ENCODE measurements at regions of chr2 and their contacts with region 1.

Region 1: GRCh38 chr2:8049851-8050571 is 631.8 kb upstream of the ID2 start:
- DNase-seq: peak; percentile 87
- ATAC-seq: peak; percentile 97
- H3K4me3 Mint-ChIP-seq: peak overlapping the region; percentile 30
- H3K27ac Mint-ChIP-seq: peak overlapping the region; percentile 88
- H3K4me1 Mint-ChIP-seq: peaks cover 34% of the 10 kb centered on the region
- H3K27me3 Mint-ChIP-seq: peaks cover 5% of the 10 kb centered on the region

Region 2: DNA sequence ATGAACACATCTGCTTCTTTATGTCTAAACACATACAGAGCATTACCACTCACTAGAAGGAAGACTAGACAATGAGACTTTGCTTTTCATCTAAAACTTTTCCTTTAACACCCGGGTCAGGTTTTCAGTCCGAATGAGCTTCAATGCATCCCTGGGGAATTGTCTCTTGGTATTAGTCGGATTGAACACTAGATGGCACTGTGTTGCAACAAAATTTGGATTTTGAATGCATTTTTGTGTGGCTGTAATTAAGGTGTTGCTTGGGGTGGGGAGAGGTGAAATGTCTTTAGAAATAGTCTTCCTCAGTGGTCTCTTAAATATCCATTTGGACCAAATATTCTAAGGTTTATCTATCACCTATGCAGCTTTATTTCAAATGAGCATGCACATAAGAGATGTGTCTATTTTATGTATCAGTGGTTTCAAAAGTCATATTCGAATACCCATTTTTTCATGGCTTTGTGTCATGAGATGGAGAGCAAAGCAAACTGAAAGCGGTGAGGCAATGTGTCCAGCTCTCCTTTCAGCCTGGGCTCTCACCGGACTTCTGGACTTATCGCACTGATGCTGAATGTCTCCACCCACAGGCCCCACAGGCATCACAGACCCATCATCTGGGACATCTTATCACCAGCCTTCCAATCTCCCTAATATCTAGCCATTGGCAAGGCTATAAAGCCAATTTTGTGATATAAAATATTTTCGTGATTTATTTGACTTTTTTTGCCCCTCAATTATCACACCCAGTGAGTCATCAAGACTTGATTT is 622.5 kb before region 1 on chr2:
- CTCF ChIA-PET with region 1: no interaction called
- POLR2A ChIA-PET with region 1: no interaction called
- intact Hi-C with region 1: loop called in 1 of 2 experiments (anchors 2 kb)
- DNase-seq: no peak
- ATAC-seq: no peak
- H3K4me3 Mint-ChIP-seq: no peak overlapping the region
- H3K27ac Mint-ChIP-seq: peak overlapping the region; percentile 51
- H3K4me1 Mint-ChIP-seq: peaks cover 41% of the 10 kb centered on the region
- H3K27me3 Mint-ChIP-seq: peaks cover 9% of the 10 kb centered on the region

Region 3: DNA sequence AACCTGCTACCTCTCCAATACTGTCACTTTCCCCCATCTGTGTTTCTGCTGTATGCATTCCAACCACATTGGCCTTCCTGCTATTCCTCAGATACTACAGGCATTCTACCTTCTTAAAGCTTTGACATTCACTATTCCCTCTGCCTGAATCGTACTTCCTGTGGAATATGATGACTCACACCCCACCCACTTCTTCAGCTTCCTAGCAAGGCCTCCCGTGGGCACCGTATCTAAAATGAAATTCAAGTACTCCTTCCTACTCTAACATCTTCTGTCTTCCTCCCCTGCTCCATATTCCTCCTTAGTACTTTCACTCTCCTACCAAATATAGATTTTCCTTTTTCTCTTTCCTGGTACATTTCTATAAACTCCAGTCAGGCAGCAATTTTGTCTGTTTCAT is 422.4 kb before region 1 on chr2:
- CTCF ChIA-PET with region 1: no interaction called
- POLR2A ChIA-PET with region 1: no interaction called
- intact Hi-C with region 1: no loop called
- DNase-seq: no peak
- ATAC-seq: no peak
- H3K4me3 Mint-ChIP-seq: no peak overlapping the region
- H3K27ac Mint-ChIP-seq: no peak overlapping the region
- H3K4me1 Mint-ChIP-seq: peaks cover 3% of the 10 kb centered on the region
- H3K27me3 Mint-ChIP-seq: no peaks in the 10 kb centered on the region

Region 4: DNA sequence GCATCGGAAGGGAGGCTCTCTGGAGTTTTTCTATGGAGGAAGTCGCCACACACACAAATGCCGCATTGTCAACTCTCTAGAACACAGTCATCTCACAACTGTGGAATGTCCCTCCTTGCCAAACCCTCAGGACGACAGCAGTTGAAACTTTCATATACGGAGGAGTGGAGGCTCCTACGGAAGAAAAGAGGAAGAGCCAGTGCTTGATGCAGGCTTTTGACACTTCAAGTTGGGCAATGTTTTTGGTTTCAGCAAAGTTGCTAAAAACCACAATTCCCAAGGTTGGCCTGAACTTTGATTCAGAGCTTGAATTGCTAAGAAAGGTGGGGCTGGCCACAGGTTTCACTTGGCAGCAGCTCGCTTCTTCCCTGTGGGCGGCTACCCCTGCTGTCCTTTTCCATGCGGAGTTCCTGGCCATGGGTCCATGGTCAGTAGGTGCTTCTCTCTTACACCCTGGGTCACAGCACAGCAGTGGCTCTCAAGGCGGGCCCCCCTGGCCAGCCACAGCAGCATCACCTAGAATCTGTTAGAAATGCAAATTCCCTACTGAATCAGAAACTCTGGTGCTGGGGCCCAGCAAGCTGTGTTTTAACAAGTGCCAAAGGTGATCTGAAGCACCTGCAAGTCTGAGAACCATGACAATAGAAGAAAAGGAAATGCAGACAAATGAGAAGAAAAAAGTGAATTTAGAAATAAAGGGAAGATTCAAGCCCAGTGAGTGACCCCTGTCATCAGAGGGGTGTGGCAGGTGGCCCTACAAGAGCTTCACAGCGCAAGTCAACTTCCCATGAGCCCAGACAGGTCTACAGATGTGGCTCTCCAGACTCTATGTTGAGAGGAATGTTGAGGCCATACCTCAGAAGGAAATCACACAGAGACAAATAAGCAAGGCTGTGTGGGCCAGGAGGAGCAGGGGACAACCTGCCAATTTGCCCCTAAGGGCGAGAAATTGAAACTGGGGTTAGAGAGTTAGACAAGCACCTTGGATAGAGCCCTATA is 276.4 kb before region 1 on chr2:
- CTCF ChIA-PET with region 1: no interaction called
- POLR2A ChIA-PET with region 1: no interaction called
- intact Hi-C with region 1: loop called in 1 of 2 experiments (anchors 5 kb)
- DNase-seq: peak; percentile 66
- ATAC-seq: peak; percentile 76
- H3K4me3 Mint-ChIP-seq: peak overlapping the region; percentile 11
- H3K27ac Mint-ChIP-seq: peak overlapping the region; percentile 64
- H3K4me1 Mint-ChIP-seq: peaks cover 28% of the 10 kb centered on the region
- H3K27me3 Mint-ChIP-seq: peaks cover 3% of the 10 kb centered on the region

Region 5: DNA sequence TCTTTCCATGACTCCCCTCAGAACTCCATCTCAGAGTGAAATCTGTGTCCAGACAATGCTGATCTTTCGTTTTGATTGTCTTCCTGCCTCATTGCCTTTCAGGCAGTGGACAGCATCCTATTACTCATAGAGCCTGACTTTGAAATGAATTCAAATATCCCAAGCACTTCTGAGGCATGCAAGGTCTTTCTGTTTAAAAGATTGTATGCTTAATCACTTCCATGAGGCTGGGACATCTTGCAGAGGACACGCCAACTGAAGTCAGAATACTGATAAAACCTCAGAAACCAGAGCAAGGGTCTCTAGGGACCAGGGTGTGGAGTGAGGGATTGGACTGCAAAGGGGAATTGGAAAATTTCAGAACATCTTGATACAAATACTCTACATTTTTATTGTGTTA is 204.7 kb before region 1 on chr2:
- CTCF ChIA-PET with region 1: no interaction called
- POLR2A ChIA-PET with region 1: interaction called, 4 read pairs
- intact Hi-C with region 1: loop called (anchors 1 to 5 kb)
- DNase-seq: no peak
- ATAC-seq: no peak
- H3K4me3 Mint-ChIP-seq: no peak overlapping the region
- H3K27ac Mint-ChIP-seq: no peak overlapping the region
- H3K4me1 Mint-ChIP-seq: peaks cover 40% of the 10 kb centered on the region
- H3K27me3 Mint-ChIP-seq: peaks cover 6% of the 10 kb centered on the region

Region 6: GRCh38 chr2:7938371-7938770 is 111.6 kb before region 1 on chr2:
- CTCF ChIA-PET with region 1: no interaction called
- POLR2A ChIA-PET with region 1: no interaction called
- intact Hi-C with region 1: loop called in 1 of 2 experiments (anchors 2 kb)
- DNase-seq: no peak
- ATAC-seq: no peak
- H3K4me3 Mint-ChIP-seq: no peak overlapping the region
- H3K27ac Mint-ChIP-seq: peak overlapping the region; percentile 9
- H3K4me1 Mint-ChIP-seq: peaks cover 26% of the 10 kb centered on the region
- H3K27me3 Mint-ChIP-seq: peaks cover 7% of the 10 kb centered on the region

Region 7: DNA sequence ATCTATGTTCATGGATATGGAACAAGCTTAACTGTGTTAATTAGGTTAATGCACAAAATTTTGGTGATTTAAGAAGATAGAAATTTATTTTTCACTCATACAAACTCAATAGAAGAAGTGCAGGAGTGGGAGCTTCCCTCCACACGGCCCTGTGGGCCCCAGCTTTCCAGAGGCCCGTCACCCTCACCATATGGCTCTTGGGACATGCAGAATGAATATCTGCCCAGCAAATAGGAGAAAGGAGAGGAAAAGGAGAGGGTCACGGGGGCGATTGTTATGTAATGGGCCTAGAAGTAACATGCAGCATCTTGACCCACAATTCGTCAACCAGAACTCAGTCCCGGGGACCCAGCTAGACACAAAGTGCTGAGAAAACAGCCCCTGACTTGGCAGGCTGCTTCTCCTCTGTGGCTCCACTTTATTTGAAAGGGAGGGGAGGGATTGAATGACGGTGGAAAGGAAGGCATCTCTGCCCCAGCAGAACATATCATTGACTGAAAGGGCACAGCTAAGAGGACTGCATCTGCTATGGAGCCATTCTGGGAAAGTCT is 16.4 kb before region 1 on chr2:
- CTCF ChIA-PET with region 1: no interaction called
- POLR2A ChIA-PET with region 1: no interaction called
- intact Hi-C with region 1: no loop called
- DNase-seq: no peak
- ATAC-seq: no peak
- H3K4me3 Mint-ChIP-seq: no peak overlapping the region
- H3K27ac Mint-ChIP-seq: no peak overlapping the region
- H3K4me1 Mint-ChIP-seq: peaks cover 9% of the 10 kb centered on the region
- H3K27me3 Mint-ChIP-seq: peaks cover 2% of the 10 kb centered on the region

Region 8: DNA sequence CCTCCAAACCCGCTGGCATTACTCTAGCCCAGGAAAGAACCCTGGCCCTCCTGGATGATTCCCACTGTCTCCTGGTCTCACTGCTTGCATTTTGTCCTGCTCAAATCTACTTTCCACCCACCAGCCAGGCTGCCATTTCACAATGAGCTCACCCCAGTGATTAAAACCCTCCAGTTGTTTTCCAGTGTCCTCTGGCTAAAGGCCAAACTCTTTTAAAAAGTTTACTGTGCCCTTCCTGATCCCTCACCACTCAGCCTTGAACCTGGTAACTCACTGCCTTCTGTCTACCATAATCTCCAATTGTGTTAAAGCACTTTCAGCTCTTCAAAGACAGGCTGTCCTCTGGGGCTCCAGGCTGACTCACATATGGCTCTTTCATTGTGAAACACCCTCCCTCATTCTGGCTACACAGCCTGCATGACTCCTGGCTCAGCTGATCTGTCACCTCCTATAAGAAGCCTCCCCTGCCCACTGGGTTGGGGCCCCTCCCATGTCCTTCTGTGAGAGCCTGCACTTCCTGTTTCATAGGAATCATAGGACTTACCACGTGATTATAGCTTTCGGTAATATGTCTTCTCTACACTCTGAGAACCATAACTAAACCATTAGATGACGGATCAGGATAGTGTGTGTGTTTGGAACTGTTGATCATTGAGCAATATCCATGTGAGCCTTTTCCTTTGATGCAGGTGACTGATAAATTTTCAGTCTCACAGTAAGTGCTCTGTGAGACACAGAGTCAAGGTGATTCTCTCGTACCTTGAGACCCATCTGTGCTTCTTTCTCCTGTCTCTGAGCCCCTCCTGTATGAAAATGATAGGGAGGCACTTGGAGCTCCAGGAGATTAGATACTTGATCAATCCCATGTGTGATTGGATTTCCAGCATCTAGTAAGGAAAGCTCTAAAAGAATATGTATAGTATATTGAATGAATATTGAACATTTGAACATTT is 41.0 kb after region 1 on chr2:
- CTCF ChIA-PET with region 1: no interaction called
- POLR2A ChIA-PET with region 1: no interaction called
- intact Hi-C with region 1: loop called in 1 of 2 experiments (anchors 1 kb)
- DNase-seq: peak; percentile 90
- ATAC-seq: peak; percentile 100
- H3K4me3 Mint-ChIP-seq: no peak overlapping the region
- H3K27ac Mint-ChIP-seq: no peak overlapping the region
- H3K4me1 Mint-ChIP-seq: no peaks in the 10 kb centered on the region
- H3K27me3 Mint-ChIP-seq: no peaks in the 10 kb centered on the region

Region 9: DNA sequence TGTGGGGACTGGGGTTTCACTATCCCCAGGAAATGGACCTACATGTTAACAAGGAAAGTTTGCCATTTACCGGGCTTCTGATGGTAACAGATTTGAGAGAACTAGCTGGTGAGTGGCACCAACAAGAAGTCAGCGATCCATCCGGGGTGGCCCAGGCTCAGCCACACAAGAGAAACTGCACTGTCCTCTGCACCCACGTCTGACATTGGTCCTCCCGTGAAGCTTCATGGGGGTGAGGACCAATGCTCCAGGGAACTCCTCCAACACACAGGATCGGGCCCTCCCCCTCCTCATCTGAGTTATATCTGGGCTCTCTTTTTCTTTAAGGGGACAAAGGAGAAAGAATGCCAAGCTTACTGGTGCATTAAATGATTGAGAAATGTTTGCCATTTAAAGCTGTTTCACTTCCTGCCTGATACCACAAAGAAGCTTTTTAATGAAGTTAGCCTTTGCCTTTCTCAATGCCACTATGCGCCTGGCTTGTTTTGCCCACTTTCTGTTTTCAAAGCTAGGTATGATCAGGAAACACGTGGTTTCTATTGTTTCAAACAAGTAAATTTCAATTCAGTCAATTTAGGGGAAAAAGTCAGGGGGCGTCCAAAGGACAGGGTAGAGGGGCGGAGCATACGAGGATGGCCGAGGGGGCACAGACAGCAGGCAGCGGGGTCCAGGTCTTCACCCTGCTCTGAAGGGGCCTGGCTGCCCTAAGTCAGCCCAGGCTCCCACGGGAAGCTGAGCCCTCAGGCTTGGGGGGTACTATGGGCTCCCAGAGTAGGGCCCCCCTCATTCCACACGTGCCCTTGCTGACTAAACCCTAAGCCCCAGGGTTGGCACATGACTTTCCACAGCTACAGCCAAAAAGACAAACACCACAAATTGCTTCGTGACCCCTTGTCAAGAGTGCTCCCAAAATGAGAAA is 427.8 kb after region 1 on chr2:
- CTCF ChIA-PET with region 1: no interaction called
- POLR2A ChIA-PET with region 1: interaction called, 3 read pairs
- intact Hi-C with region 1: loop called in 1 of 2 experiments (anchors 1 kb)
- DNase-seq: peak; percentile 45
- ATAC-seq: no peak
- H3K4me3 Mint-ChIP-seq: peak overlapping the region; percentile 49
- H3K27ac Mint-ChIP-seq: peak overlapping the region; percentile 89
- H3K4me1 Mint-ChIP-seq: peaks cover 77% of the 10 kb centered on the region
- H3K27me3 Mint-ChIP-seq: no peaks in the 10 kb centered on the region